A673 (cell line): ENCODE measurements at regions of chr19 and their contacts with region 1.

Region 1: DNA sequence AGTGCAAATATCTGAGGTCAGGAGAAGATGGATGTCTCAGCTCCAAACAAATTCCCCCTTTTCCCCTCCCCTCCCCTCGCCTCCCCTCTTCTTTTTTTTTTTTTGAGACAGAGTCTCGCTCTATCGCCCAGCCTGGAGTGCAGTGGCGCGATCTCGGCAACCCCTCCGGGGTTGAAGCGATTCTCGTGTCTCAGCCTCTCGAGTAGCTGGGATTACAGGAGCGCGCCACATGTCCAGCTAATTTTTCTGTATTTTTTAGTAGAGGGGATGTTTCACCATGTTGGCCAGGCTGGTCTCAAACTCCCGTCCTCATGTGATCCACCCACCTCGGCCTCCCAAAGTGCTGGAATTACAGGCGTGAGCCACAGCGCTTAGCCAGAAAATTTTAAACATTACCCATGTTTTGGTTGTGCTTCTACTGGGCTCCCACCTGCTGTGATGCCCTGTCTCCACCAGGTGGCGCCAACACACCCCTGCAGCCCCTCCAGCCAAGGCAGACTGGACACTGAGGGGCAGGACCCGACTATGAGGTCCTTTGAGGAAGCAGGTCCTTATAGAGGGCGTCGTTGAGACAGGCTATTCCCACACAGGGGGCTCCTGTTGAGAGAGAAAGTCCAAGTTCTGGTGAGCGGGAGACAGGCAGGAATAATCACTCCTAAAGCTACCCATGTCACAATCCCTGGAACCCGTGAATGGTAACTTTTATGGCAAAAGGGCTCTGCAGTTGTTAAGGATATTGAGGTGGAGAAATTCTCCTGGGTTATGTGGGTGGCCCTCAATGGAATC is 6.3 kb downstream of the ERICH4 start:
- DNase-seq: peak; percentile 75
- H3K4me3 ChIP-seq: peak overlapping the region; percentile 42
- H3K27ac ChIP-seq: no peak overlapping the region
- H3K4me1 ChIP-seq: peaks cover 6% of the 10 kb centered on the region
- H3K27me3 ChIP-seq: no peaks in the 10 kb centered on the region
- CTCF ChIP-seq: peak; percentile 98

Region 2: DNA sequence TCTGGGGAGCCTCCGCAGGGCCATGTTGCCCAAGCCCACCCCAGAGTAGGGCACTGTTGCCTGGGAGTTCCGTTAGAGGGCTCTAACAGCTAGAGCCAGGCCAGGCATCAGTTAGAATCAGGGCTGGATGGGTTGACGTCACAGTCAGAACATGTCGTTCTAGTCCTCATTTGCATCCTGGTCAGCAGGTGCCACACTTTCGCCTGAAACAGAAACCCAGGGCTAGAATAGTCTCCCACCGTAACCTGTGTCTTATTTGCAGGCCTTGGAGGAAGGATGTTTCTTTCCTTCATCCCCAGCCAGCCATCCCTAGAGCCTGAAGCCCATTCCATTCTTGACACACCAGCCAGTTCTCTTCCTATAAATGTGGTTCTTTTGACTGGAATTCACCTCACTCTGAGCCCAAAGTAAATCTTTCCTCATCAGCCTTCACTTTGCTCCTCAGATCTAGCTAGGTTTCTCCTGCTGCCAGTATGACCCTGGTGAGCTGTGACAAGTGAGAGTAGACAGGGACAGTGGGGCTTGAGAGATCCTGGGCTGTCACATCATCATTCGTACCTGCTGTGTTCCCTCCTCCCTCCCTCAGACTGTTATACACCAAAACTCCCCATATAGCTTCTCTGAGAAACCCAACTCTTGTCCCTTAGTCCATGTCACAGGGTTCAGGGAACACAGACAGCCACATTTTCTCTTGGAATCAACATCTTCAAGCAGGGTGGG is 151.5 kb before region 1 on chr19:
- CTCF ChIA-PET with region 1: interaction called, 11 read pairs
- POLR2A ChIA-PET with region 1: no interaction called
- intact Hi-C with region 1: no loop called
- DNase-seq: no peak
- H3K4me3 ChIP-seq: no peak overlapping the region
- H3K27ac ChIP-seq: no peak overlapping the region
- H3K4me1 ChIP-seq: no peaks in the 10 kb centered on the region
- H3K27me3 ChIP-seq: no peaks in the 10 kb centered on the region
- CTCF ChIP-seq: no peak

Region 3: GRCh38 chr19:41570639-41571112 is 121.4 kb after region 1 on chr19:
- CTCF ChIA-PET with region 1: interaction called, 44 read pairs
- POLR2A ChIA-PET with region 1: no interaction called
- intact Hi-C with region 1: loop called (anchors 1 kb)
- DNase-seq: peak; percentile 86
- H3K4me3 ChIP-seq: no peak overlapping the region
- H3K27ac ChIP-seq: no peak overlapping the region
- H3K4me1 ChIP-seq: no peaks in the 10 kb centered on the region
- H3K27me3 ChIP-seq: peaks cover 19% of the 10 kb centered on the region
- CTCF ChIP-seq: peak; percentile 96